ENCODE measurements at regions of chr4 and their contacts with region 1.

Region 1: DNA sequence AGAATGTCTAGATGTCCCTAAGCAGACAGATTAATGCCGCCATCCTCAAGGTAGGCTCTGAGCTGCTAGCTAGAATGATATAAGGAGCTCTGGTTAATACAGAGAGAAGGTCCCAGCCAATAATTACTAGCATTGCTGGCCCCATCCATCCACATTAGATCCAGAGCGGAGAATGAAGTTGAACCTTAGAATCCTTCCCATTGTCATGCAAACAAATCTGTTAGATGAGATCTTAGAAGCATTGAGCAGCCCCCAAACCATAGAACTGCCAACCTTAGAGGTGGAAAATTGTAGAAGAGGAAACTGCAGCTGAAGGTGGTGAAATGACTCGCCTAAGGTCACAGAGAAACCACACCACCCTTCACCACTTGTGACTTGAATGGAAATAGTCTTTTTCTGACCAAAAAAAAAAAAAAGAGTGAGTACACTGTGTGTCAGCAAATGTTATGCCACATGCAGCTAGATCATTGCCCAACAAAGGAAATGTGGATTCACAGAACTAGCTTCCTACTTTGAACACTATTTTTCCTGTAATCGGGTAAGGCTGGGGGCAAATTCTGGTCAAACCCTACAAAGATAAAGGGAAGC is 162.1 kb downstream of the SMIM20 start:
- DNase-seq: peak; percentile 65
- H3K4me3 Mint-ChIP-seq: peak overlapping the region; percentile 58
- H3K27ac Mint-ChIP-seq: peak overlapping the region; percentile 99
- H3K4me1 Mint-ChIP-seq: peaks cover 77% of the 10 kb centered on the region
- H3K27me3 Mint-ChIP-seq: no peaks in the 10 kb centered on the region

Region 2: DNA sequence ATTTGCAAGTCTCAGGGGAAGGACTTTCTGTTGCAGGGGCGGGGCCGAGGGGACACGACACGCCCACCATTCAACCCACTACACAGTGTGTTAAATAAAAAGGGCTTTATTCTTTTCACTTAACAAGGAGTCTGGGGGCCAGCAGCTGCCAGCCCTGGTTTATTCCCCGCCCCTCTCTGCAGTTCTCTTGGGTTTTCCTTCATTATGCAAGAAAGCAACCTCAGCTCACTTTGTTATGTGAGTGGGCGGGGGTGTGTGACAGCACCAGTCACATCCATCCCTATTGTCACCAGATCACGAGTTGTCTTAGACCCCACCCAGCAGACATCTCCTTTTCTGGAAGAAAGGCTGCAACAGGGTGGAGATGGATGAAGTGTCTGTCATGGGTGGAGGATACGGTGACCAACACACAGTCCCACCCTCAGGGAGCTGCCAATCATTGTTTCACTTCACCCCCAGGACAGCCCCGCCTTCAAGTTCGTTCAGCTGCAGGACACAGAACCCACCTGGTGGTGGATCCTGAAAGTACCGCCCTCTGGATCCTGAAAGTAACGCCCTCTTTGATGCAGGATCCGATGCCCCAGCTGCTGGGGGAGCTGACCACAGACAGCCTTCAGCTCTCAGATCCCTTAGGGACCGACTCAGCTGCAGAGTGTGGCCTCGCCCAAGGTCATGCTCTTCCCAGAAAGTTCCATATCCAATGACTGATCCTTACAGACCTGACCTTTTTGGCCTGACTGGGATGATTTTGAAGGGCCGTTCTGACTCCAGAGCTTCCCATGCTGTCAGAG is 82.5 kb before region 1 on chr4:
- intact Hi-C with region 1: loop called (anchors 1 kb)
- DNase-seq: no peak
- H3K4me3 Mint-ChIP-seq: no peak overlapping the region
- H3K27ac Mint-ChIP-seq: no peak overlapping the region
- H3K4me1 Mint-ChIP-seq: peaks cover 14% of the 10 kb centered on the region
- H3K27me3 Mint-ChIP-seq: no peaks in the 10 kb centered on the region

Region 3: DNA sequence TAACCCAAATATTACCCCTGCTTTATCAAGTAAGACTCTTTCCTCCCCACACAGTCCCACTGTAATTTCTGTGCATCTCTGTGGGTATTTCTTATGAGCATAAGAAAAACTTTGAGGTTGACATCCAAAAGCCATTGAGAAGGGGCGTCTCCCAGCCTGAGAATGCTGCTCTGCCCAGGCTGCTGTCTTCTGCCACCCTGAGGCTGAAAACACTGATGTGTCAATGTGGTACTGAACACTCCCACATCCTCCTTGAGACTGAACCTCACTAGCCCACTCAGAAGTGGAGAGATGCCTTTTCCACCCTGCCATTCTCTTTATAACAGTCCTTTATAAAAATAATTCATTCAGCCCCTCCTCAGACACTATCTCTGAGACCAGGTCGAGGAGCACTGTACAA is 41.2 kb before region 1 on chr4:
- intact Hi-C with region 1: loop called (anchors 1 kb)
- DNase-seq: no peak
- H3K4me3 Mint-ChIP-seq: no peak overlapping the region
- H3K27ac Mint-ChIP-seq: peak overlapping the region; percentile 31
- H3K4me1 Mint-ChIP-seq: peaks cover 42% of the 10 kb centered on the region
- H3K27me3 Mint-ChIP-seq: no peaks in the 10 kb centered on the region

Region 4: GRCh38 chr4:26088433-26088928 is 12.4 kb after region 1 on chr4:
- intact Hi-C with region 1: loop called (anchors 1 kb)
- DNase-seq: no peak
- H3K4me3 Mint-ChIP-seq: peak overlapping the region; percentile 55
- H3K27ac Mint-ChIP-seq: peak overlapping the region; percentile 94
- H3K4me1 Mint-ChIP-seq: peaks cover 70% of the 10 kb centered on the region
- H3K27me3 Mint-ChIP-seq: no peaks in the 10 kb centered on the region

Region 5: DNA sequence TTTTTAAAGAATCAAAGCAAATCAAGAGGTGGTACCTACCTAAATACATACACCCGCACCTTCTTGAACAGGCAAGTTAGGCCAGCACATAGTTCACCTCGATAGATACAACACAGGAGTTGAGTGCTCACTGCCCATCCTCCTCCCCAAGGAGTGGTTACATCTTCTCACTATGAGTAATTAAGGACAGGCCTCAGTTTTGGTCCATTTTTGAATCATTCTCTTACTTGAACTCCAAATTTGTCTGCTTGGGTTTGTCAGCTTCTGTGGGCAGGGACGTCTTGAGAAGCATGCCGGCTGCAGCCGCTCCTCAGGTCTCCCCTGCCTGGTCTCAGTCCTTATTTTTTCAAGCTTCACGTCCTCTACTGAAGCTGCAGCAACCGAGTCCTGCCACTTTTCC is 54.1 kb after region 1 on chr4:
- intact Hi-C with region 1: loop called (anchors 1 kb)
- DNase-seq: peak; percentile 28
- H3K4me3 Mint-ChIP-seq: peak overlapping the region; percentile 34
- H3K27ac Mint-ChIP-seq: peak overlapping the region; percentile 90
- H3K4me1 Mint-ChIP-seq: peaks cover 81% of the 10 kb centered on the region
- H3K27me3 Mint-ChIP-seq: no peaks in the 10 kb centered on the region

Region 6: DNA sequence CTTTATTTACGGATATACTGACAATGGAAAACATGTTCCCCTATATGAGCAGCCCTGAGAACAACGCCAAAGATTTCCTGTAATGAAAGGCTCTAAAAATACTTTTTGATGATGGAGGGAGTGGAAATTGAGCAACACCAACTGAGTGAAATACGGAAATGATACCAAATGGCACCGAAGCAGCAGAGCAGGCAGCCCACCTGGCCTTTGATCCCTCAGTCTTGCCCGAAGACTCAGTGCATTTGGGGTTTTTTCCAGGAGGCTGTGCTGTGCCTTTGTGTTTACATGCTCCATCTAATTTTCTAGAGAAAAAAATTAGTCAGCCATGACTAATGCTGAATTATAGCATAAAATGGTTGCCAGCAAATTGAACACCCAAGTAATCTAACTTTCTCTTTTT is 74.9 kb after region 1 on chr4:
- intact Hi-C with region 1: loop called (anchors 1 kb)
- DNase-seq: no peak
- H3K4me3 Mint-ChIP-seq: no peak overlapping the region
- H3K27ac Mint-ChIP-seq: peak overlapping the region; percentile 95
- H3K4me1 Mint-ChIP-seq: peaks cover 85% of the 10 kb centered on the region
- H3K27me3 Mint-ChIP-seq: no peaks in the 10 kb centered on the region

Region 7: GRCh38 chr4:26372525-26373172 is 296.6 kb after region 1 on chr4:
- intact Hi-C with region 1: loop called (anchors 5 kb)
- DNase-seq: peak; percentile 58
- H3K4me3 Mint-ChIP-seq: peak overlapping the region; percentile 3
- H3K27ac Mint-ChIP-seq: peak overlapping the region; percentile 56
- H3K4me1 Mint-ChIP-seq: peaks cover 72% of the 10 kb centered on the region
- H3K27me3 Mint-ChIP-seq: no peaks in the 10 kb centered on the region

Region 8: DNA sequence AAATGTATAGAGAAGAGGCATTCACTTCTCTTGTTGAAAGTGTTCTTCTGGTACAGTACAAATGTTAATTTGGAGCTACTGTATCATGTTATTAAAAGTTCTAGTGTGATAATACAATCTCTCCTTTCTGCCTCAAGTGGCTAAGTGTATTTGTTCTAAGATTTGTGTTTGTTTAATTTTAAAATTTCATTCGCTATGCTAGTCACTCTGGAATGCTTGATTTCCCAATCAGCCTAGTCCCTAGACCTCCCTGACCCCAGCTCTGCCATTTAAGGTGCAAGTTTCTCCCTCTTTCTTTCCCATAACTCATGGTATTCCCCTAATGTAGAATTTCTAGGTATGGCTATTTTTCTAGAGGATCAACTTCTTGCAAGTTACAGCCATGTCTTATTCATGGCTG is 1601.9 kb after region 1 on chr4:
- intact Hi-C with region 1: no loop called
- DNase-seq: no peak
- H3K4me3 Mint-ChIP-seq: no peak overlapping the region
- H3K27ac Mint-ChIP-seq: no peak overlapping the region
- H3K4me1 Mint-ChIP-seq: no peaks in the 10 kb centered on the region
- H3K27me3 Mint-ChIP-seq: no peaks in the 10 kb centered on the region

Measured in activated T-helper 2 cell treated with anti-CD3 and anti-CD28 coated beads, Interferon-gamma antibody, Interleukin-2, Interleukin-4, amounts not matched to agents 10 μg/mL and 5 μg/mL and 100 μg/mL, durations not matched to agents 14 hours and 24 hours and 36 hours (primary cell).